ENCODE measurements at regions of chr19 and their contacts with region 1.

Region 1: GRCh38 chr19:29610563-29611271 is 4.6 kb downstream of the POP4 start:
- DNase-seq: peak; percentile 93

Region 2: GRCh38 chr19:29680447-29680846 is 69.7 kb after region 1 on chr19:
- in situ Hi-C with region 1: loop called (anchors 10 kb)
- DNase-seq: peak; percentile 78

Measured in KBM-7 (cell line).